Naive thymus-derived CD4-positive, alpha-beta T cell (primary cell): ENCODE measurements at regions of chr2 and their contacts with region 1.

Region 1: GRCh38 chr2:27890146-27890923 is at the starts of genes BABAM2 and RBKS:
- DNase-seq: peak; percentile 90 to 96 (median 94)
- ATAC-seq: peak; percentile 92
- H3K4me3 ChIP-seq: peak within 1 kb of the TSS; percentile 95
- H3K4me3 Mint-ChIP-seq: peak within 1 kb of the TSS; percentile 96 to 100 (median 98)
- H3K27ac ChIP-seq: peak within 1 kb of the TSS; percentile 99
- H3K27ac Mint-ChIP-seq: peak within 1 kb of the TSS; percentile 95 to 100 (median 100)
- H3K4me1 ChIP-seq: peaks cover 27 to 30% of the 10 kb centered on the region in 2 donors
- H3K4me1 Mint-ChIP-seq: peaks cover 28 to 60% (median 55%) of the 10 kb centered on the region in 7 donors
- H3K27me3 ChIP-seq: no peaks in the 10 kb centered on the region
- H3K27me3 Mint-ChIP-seq: peaks cover 0 to 3% (median 0%) of the 10 kb centered on the region in 5 donors
- total RNA-seq, gene BABAM2: 34.2 to 55.8 (median 40.3) TPM
- total RNA-seq, gene RBKS: 1.5 to 10.8 (median 2.0) TPM

Region 2: DNA sequence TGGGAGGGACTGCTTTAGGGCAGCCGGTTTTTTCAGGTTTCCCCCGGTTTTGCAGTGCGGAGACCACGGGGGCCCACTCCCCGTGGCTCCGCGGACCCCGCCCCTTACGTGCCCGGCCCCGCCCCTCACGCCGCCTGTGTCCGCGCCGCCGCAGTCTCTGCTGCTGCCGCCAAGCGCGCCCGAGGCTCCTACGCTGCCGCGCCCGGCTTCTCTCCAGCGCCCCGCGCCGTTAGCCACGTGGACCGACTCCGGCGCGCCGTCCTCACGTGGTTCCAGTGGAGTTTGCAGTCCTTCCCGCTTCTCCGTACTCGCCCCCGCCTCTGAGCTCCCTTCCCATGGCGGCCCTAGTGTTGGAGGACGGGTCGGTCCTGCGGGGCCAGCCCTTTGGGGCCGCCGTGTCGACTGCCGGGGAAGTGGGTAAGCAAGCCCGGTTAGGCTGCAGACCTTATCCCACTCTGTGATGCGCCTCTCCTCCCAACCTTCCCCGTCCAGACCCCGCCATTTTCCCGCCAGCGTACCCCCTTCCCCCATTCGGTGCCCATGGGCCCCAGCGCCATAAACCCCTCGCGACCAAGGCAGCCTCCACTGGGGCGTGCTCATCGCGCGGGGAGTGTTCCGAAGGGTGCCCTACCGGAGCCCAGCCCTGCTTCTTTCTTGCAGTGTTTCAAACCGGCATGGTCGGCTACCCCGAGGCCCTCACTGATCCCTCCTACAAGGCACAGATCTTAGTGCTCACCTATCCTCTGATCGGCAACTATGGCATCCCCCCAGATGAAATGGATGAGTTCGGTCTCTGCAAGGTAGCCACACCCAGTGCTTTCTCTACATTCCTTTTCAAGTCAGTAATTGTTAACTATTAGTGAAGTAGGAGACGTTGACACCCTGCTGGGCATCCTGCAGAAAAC is 672.9 kb before region 1 on chr2 and contains the start of gene CAD:
- CTCF ChIA-PET with region 1: no interaction called
- POLR2A ChIA-PET with region 1: no interaction called
- intact Hi-C with region 1: loop called in 1 of 2 experiments (anchors 10 kb)
- DNase-seq: peak; percentile 71 to 90 (median 80)
- ATAC-seq: peak; percentile 87
- H3K4me3 ChIP-seq: peak within 1 kb of the TSS; percentile 68
- H3K4me3 Mint-ChIP-seq: peak within 1 kb of the TSS; percentile 90 to 98 (median 96)
- H3K27ac ChIP-seq: peak within 1 kb of the TSS; percentile 85
- H3K27ac Mint-ChIP-seq: peak within 1 kb of the TSS; percentile 86 to 96 (median 94)
- H3K4me1 ChIP-seq: peaks cover 19 to 24% of the 10 kb centered on the region in 2 donors
- H3K4me1 Mint-ChIP-seq: peaks cover 26 to 52% (median 45%) of the 10 kb centered on the region in 7 donors
- H3K27me3 ChIP-seq: no peaks in the 10 kb centered on the region
- H3K27me3 Mint-ChIP-seq: no peaks in the 10 kb centered on the region
- total RNA-seq, gene CAD: 34.4 to 65.7 (median 45.4) TPM

Region 3: DNA sequence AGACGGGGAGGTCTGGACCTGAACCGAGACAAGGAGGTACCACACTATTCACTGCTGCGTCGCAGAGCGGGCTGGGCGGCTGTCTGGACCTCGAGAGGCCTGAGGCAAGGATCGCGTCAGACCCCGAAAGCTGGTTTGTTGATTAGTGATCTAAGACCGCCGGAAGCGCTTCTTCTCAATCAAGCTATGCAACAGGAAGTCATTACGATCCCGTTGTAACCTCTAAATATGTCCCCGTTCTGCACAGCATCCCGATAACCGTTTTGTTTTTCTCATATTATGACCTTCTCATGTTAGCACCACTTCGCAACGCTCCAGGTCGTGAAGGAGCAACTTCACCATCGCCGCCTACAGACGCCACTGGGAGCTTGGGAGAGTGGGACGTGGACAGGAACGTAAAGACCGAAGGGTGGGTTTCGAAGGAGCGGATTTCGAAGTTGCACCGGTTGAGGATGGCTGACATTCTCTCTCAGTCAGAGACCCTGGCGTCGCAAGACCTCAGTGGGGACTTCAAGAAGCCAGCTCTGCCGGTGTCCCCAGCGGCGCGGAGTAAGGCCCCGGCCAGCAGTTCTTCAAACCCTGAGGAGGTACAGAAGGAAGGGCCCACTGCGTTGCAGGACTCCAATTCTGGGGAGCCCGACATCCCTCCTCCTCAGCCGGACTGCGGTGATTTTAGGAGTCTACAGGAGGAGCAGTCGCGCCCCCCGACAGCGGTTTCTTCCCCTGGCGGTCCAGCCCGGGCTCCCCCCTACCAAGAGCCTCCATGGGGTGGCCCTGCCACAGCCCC is 226.7 kb before region 1 on chr2 and contains the starts of genes SLC4A1AP and SUPT7L:
- CTCF ChIA-PET with region 1: no interaction called
- POLR2A ChIA-PET with region 1: no interaction called
- intact Hi-C with region 1: loop called in 1 of 2 experiments (anchors 1 kb)
- DNase-seq: peak; percentile 74 to 88 (median 82)
- ATAC-seq: peak; percentile 89
- H3K4me3 ChIP-seq: peak within 1 kb of the TSS; percentile 98
- H3K4me3 Mint-ChIP-seq: peak within 1 kb of the TSS; percentile 94 to 100 (median 100)
- H3K27ac ChIP-seq: peak within 1 kb of the TSS; percentile 95
- H3K27ac Mint-ChIP-seq: peak within 1 kb of the TSS; percentile 98 to 100 (median 99)
- H3K4me1 ChIP-seq: peaks cover 18 to 20% of the 10 kb centered on the region in 2 donors
- H3K4me1 Mint-ChIP-seq: peaks cover 35 to 75% (median 64%) of the 10 kb centered on the region in 7 donors
- H3K27me3 ChIP-seq: no peaks in the 10 kb centered on the region
- H3K27me3 Mint-ChIP-seq: no peaks in the 10 kb centered on the region
- total RNA-seq, gene SLC4A1AP: 14.7 to 27.0 (median 23.2) TPM
- total RNA-seq, gene SUPT7L: 37.9 to 58.6 (median 46.5) TPM

Region 4: DNA sequence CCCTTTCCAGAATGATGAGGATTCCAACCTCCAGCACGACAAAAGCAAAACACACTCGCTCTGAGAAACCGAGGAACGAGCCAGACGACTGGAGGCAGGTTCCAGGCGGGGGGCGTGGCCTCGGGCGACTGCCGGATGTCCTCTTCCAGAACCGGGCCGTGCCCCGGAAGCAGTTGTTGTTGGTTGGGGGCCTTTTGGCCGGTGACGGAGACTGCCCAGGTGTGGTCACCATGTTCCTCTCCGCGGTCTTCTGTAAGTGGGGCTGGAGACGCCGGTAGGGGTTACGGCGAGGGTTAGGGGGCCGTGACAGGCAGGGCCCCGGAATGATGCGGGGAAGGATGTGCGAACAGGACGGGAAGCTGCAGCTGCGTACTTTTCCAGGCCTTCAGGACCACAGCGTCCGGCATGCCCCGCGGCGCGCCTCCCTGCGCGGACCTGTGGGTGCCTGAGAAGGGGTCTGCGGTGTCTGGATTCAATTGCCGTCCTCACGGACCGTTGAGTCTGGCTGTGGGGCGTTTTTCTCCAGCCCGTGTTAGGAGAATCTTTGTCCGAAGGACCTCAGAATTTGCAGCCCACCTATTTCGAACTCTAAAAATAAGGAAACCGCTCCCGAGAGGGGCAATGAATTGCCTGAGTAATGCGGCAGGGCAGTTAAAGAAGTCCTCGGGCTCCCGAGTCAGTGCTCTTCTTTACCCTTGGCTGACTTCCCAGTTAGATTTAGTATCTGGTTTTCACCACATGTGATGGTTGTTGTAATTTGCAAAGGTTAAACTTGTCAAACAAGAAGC is 118.6 kb before region 1 on chr2 and contains the start of gene MRPL33:
- CTCF ChIA-PET with region 1: no interaction called
- POLR2A ChIA-PET with region 1: no interaction called
- intact Hi-C with region 1: loop called (anchors 1 kb)
- DNase-seq: peak; percentile 85 to 92 (median 89)
- ATAC-seq: peak; percentile 97
- H3K4me3 ChIP-seq: peak within 1 kb of the TSS; percentile 92
- H3K4me3 Mint-ChIP-seq: peak within 1 kb of the TSS; percentile 96 to 100 (median 99)
- H3K27ac ChIP-seq: peak within 1 kb of the TSS; percentile 92
- H3K27ac Mint-ChIP-seq: peak within 1 kb of the TSS; percentile 97 to 100 (median 100)
- H3K4me1 ChIP-seq: peaks cover 10 to 20% of the 10 kb centered on the region in 2 donors
- H3K4me1 Mint-ChIP-seq: peaks cover 32 to 59% (median 52%) of the 10 kb centered on the region in 7 donors
- H3K27me3 ChIP-seq: no peaks in the 10 kb centered on the region
- H3K27me3 Mint-ChIP-seq: peaks cover 0 to 8% (median 0%) of the 10 kb centered on the region in 5 donors
- total RNA-seq, gene MRPL33: 27.3 to 39.4 (median 35.1) TPM

Region 5: DNA sequence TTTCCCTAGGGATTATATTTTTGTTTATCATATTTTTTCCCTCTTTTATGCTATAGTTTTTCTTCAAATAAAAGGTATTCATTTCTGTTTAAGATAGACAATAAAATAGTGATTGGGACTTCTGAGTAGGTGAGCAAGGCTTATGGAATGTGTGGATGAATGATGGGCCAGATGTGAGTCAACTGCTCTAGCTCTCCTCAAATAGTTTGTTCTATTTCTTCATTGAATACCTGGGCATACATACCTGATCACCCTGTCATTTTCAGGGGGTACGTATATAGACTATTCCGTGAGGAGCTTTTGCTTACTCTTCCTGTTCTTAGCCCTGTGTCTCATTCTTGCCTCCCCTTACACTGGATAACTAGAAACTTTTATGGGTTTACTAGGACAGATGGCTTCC is 42.1 kb after region 1 on chr2:
- CTCF ChIA-PET with region 1: no interaction called
- POLR2A ChIA-PET with region 1: no interaction called
- intact Hi-C with region 1: no loop called
- DNase-seq: no peak
- ATAC-seq: no peak
- H3K4me3 ChIP-seq: no peak overlapping the region
- H3K4me3 Mint-ChIP-seq: no peak overlapping the region
- H3K27ac ChIP-seq: no peak overlapping the region
- H3K27ac Mint-ChIP-seq: no peak overlapping the region
- H3K4me1 ChIP-seq: no peaks in the 10 kb centered on the region
- H3K4me1 Mint-ChIP-seq: peaks cover 0 to 14% (median 7%) of the 10 kb centered on the region in 7 donors
- H3K27me3 ChIP-seq: no peaks in the 10 kb centered on the region
- H3K27me3 Mint-ChIP-seq: no peaks in the 10 kb centered on the region

Region 6: GRCh38 chr2:27966483-27966882 is 76.1 kb after region 1 on chr2:
- CTCF ChIA-PET with region 1: interaction called, 4 read pairs
- POLR2A ChIA-PET with region 1: interaction called, 3 read pairs
- intact Hi-C with region 1: loop called in 1 of 2 experiments (anchors 1 kb)
- DNase-seq: no peak
- ATAC-seq: no peak
- H3K4me3 ChIP-seq: no peak overlapping the region
- H3K4me3 Mint-ChIP-seq: peak overlapping the region in 9 of 10 donors; percentile 4 to 84 (median 38)
- H3K27ac ChIP-seq: no peak overlapping the region
- H3K27ac Mint-ChIP-seq: peak overlapping the region in 8 of 9 donors; percentile 3 to 93 (median 70)
- H3K4me1 ChIP-seq: peaks cover 14 to 18% of the 10 kb centered on the region in 2 donors
- H3K4me1 Mint-ChIP-seq: peaks cover 22 to 55% (median 37%) of the 10 kb centered on the region in 7 donors
- H3K27me3 ChIP-seq: no peaks in the 10 kb centered on the region
- H3K27me3 Mint-ChIP-seq: no peaks in the 10 kb centered on the region

Region 7: GRCh38 chr2:29115797-29116781 is 1225.8 kb after region 1 on chr2:
- CTCF ChIA-PET with region 1: no interaction called
- POLR2A ChIA-PET with region 1: no interaction called
- intact Hi-C with region 1: loop called (anchors 5 kb)
- DNase-seq: peak; percentile 39 to 82 (median 75)
- ATAC-seq: peak; percentile 62
- H3K4me3 ChIP-seq: peak overlapping the region; percentile 75
- H3K4me3 Mint-ChIP-seq: peak overlapping the region; percentile 86 to 98 (median 88)
- H3K27ac ChIP-seq: peak overlapping the region; percentile 73
- H3K27ac Mint-ChIP-seq: peak overlapping the region; percentile 87 to 99 (median 97)
- H3K4me1 ChIP-seq: peaks cover 8 to 20% of the 10 kb centered on the region in 2 donors
- H3K4me1 Mint-ChIP-seq: peaks cover 23 to 61% (median 55%) of the 10 kb centered on the region in 7 donors
- H3K27me3 ChIP-seq: no peaks in the 10 kb centered on the region
- H3K27me3 Mint-ChIP-seq: peaks cover 0 to 12% (median 0%) of the 10 kb centered on the region in 5 donors